HAP-1 (cell line): ENCODE measurements at regions of chr11 and their contacts with region 1.

Region 1: GRCh38 chr11:124586238-124586860 is 16.6 kb downstream of the OR8A1 start:
- DNase-seq: peak; percentile 34 to 67
- H3K4me3 ChIP-seq: no peak overlapping the region
- H3K4me1 ChIP-seq: no peaks in the 10 kb centered on the region
- H3K27me3 ChIP-seq: peaks cover 9% of the 10 kb centered on the region; the same call in 1 of the 2 replicates

Region 2: GRCh38 chr11:124075841-124076651 is 510.3 kb before region 1 on chr11:
- in situ Hi-C with region 1: loop called (anchors 25 kb)
- DNase-seq: no peak
- H3K4me3 ChIP-seq: no peak overlapping the region
- H3K4me1 ChIP-seq: no peaks in the 10 kb centered on the region
- H3K27me3 ChIP-seq: no peaks in the 10 kb centered on the region

Region 3: DNA sequence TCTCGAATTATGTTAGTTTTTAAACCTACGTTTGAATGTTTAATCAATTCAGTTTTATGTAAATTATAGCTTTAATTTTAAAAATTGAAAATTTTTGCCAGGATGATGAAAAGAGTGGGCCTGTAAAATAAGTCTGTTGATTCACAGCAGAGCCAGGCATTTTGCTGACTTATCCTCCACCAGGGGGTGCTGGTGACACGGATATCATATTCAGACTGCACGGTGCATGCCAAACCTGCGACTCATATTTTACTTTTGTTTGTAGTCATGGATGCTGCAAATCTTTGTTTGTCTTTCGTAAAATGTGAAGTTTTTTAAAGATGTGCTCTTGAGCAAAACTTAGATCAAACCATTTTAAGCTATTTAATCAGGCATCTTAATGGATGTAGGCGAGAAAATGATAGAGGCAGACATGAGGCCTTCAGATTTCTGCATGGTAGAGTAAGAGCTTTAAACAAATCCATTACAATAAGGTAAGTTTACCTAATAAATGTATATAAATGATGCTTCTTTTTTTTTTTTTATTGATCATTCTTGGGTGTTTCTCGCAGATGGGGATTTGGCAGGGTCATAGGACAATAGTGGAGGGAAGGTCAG is 183.9 kb before region 1 on chr11:
- in situ Hi-C with region 1: loop called (anchors 25 kb)
- DNase-seq: peak; percentile 58 to 80
- H3K4me3 ChIP-seq: no peak overlapping the region
- H3K4me1 ChIP-seq: no peaks in the 10 kb centered on the region
- H3K27me3 ChIP-seq: 0 out of 2 replicates have a peak, but pooled peaks cover 3% of the 10 kb centered on the region

Region 4: GRCh38 chr11:124865921-124866583 is 279.7 kb after region 1 on chr11:
- in situ Hi-C with region 1: no loop called
- DNase-seq: peak in 1 of 2 experiments; percentile 73
- H3K4me3 ChIP-seq: peak overlapping the region; percentile 8
- H3K4me1 ChIP-seq: peaks cover 3% of the 10 kb centered on the region; the same call in 1 of the 2 replicates
- H3K27me3 ChIP-seq: peaks cover 93% of the 10 kb centered on the region